CD4-positive, alpha-beta memory T cell (primary cell): ENCODE measurements at regions of chr7 and their contacts with region 1.

Region 1: GRCh38 chr7:16982640-16983350 is 101.0 kb upstream of the AGR3 start:
- DNase-seq: peak; percentile 37 to 51 (median 42)
- H3K4me3 ChIP-seq: no peak overlapping the region
- H3K4me3 Mint-ChIP-seq: peak overlapping the region in 6 of 8 donors; percentile 10 to 73 (median 43)
- H3K27ac ChIP-seq: no peak overlapping the region
- H3K27ac Mint-ChIP-seq: peak overlapping the region in 3 of 7 donors; percentile 4 to 25 (median 11)
- H3K4me1 ChIP-seq: no peaks in the 10 kb centered on the region
- H3K4me1 Mint-ChIP-seq: peaks cover 0 to 3% (median 1%) of the 10 kb centered on the region in 4 donors
- H3K27me3 ChIP-seq: no peaks in the 10 kb centered on the region
- H3K27me3 Mint-ChIP-seq: peaks cover 2 to 5% of the 10 kb centered on the region in 2 donors

Region 2: GRCh38 chr7:17530741-17531417 is 548.1 kb after region 1 on chr7:
- CTCF ChIA-PET with region 1: interaction called, 4 read pairs
- POLR2A ChIA-PET with region 1: no interaction called
- intact Hi-C with region 1: loop called (anchors 1 kb)
- DNase-seq: peak in 1 of 5 donors; percentile 15
- H3K4me3 ChIP-seq: no peak overlapping the region
- H3K4me3 Mint-ChIP-seq: no peak overlapping the region
- H3K27ac ChIP-seq: no peak overlapping the region
- H3K27ac Mint-ChIP-seq: no peak overlapping the region
- H3K4me1 ChIP-seq: no peaks in the 10 kb centered on the region
- H3K4me1 Mint-ChIP-seq: peaks cover 0 to 8% (median 4%) of the 10 kb centered on the region in 4 donors
- H3K27me3 ChIP-seq: no peaks in the 10 kb centered on the region
- H3K27me3 Mint-ChIP-seq: peaks cover 0 to 3% of the 10 kb centered on the region in 2 donors

Region 3: GRCh38 chr7:17640730-17641377 is 658.1 kb after region 1 on chr7:
- CTCF ChIA-PET with region 1: interaction called, 7 read pairs
- POLR2A ChIA-PET with region 1: no interaction called
- intact Hi-C with region 1: loop called (anchors 2 kb)
- DNase-seq: peak in 4 of 5 donors; percentile 3 to 40 (median 21)
- H3K4me3 ChIP-seq: no peak overlapping the region
- H3K4me3 Mint-ChIP-seq: no peak overlapping the region
- H3K27ac ChIP-seq: no peak overlapping the region
- H3K27ac Mint-ChIP-seq: no peak overlapping the region
- H3K4me1 ChIP-seq: no peaks in the 10 kb centered on the region
- H3K4me1 Mint-ChIP-seq: peaks cover 0 to 4% (median 0%) of the 10 kb centered on the region in 4 donors
- H3K27me3 ChIP-seq: no peaks in the 10 kb centered on the region
- H3K27me3 Mint-ChIP-seq: peaks cover 4 to 15% of the 10 kb centered on the region in 2 donors